OCI-LY7 (cell line): ENCODE measurements at regions of chr2 and their contacts with region 1.

Region 1: DNA sequence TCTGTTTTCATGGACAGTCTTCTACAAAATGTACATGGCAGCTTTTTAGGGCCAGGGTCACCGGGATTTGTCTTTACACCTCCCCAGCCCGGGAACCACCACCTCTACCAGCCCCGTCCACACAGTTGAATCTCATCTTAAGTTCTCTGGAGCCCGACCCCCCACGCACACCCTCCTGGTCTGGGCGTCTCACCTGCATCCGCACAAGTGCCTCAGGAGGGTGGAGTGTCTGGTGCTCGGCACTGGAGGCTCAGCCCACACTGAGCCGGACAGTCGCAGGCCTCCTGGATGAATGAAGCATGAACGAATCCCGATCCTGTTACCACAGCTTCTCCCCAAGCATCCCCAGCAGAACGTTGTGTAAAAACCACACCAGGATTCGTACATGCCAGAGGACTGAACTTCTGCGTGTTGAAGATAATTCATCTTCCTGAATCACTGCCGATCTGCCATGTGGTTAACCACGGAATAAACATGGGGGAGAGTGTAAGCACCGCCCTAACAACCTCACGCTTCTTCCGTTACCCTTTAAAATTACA is 162.0 kb downstream of the RTP5 start:
- DNase-seq: peak; percentile 7
- H3K4me3 ChIP-seq: no peak overlapping the region
- H3K27ac ChIP-seq: no peak overlapping the region
- H3K4me1 ChIP-seq: no peaks in the 10 kb centered on the region
- CTCF ChIP-seq: no peak

Region 2: DNA sequence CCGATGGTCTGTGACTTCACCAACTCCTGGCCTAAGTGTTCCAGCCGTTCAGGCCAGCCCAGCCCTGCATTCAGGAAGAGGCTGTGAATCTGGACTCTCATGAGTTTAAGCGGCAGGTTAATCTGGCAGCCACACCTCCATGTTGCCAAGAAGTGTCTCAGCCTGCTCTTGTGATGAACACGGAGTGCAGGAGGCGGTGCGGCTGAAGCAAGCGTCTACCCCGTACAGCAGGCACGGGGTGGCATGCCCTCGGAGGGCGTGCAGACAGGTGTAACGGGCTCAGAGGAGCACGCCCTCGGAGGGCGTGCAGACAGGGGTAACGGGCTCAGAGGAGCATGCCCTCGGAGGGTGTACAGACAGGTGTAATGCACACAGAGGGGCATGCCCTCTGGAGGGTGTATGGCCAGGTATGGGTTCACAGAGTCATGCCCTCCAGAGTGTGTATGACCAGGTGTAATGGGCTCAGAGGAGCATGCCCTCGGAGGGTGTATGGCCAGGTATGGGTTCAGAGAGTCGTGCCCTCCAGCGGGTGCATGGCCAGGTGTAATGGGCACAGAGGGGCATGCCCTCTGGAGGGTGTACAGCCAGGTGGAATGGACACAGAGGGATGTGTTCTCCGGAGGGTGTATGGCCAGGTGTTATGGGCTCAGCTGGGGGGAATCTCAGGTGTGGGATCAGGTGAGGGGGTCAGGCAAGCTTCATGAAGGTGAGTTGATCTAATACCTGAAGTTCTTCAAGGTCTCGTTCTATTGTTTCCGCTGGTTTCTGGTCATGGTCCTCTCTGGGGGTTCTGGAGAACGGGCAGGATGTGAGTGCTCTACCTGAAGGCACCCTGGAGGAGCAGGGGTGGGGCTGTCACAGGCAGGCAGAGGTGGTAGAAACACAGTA is 1102.8 kb before region 1 on chr2:
- CTCF ChIA-PET with region 1: interaction called, 12 read pairs
- POLR2A ChIA-PET with region 1: no interaction called
- intact Hi-C with region 1: no loop called
- DNase-seq: no peak
- H3K4me3 ChIP-seq: no peak overlapping the region
- H3K27ac ChIP-seq: no peak overlapping the region
- H3K4me1 ChIP-seq: no peaks in the 10 kb centered on the region
- CTCF ChIP-seq: no peak

Region 3: DNA sequence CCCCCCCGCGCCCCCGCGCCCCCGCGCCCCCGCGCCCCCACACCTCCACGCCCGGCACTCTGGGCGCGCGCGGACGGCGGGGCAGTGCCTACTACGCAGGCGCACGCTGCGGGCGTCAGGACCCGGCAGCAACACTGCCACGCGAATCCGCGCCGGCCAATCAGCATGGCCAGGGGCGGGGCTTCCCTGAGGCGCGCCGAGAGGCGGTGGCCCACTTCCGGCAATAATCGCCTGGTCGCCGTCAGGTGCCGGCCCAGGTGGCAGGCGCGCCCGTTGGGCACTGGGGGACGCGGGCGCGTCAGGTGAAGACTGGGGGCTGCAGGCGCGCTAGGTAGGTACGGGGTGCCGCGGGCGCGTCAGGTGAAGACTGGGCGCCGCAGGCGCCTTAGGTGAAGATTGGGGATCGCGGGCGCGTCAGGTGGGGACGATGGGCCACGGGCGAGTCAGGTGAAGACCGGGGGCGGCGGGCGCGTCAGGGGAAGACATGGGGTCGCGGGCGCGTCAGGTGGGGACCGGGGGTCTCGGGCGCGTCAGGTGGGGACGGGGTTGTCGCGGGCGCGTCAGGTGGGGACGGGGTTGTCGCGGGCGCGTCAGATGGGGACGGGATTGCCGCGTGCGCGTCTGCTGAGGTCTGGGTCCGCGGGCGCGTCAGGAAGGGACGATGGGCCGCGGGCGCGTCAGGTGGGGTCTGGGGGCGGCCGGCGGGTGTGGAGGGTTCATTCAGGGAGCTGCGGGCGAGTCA is 57.1 kb after region 1 on chr2:
- CTCF ChIA-PET with region 1: no interaction called
- POLR2A ChIA-PET with region 1: no interaction called
- intact Hi-C with region 1: no loop called
- DNase-seq: peak; percentile 93
- H3K4me3 ChIP-seq: peak overlapping the region; percentile 93
- H3K27ac ChIP-seq: no peak overlapping the region
- H3K4me1 ChIP-seq: peaks cover 30% of the 10 kb centered on the region
- CTCF ChIP-seq: no peak